Heart left ventricle (tissue), 16 donors: ENCODE measurements at regions of chr2 and their contacts with region 1.

Region 1: DNA sequence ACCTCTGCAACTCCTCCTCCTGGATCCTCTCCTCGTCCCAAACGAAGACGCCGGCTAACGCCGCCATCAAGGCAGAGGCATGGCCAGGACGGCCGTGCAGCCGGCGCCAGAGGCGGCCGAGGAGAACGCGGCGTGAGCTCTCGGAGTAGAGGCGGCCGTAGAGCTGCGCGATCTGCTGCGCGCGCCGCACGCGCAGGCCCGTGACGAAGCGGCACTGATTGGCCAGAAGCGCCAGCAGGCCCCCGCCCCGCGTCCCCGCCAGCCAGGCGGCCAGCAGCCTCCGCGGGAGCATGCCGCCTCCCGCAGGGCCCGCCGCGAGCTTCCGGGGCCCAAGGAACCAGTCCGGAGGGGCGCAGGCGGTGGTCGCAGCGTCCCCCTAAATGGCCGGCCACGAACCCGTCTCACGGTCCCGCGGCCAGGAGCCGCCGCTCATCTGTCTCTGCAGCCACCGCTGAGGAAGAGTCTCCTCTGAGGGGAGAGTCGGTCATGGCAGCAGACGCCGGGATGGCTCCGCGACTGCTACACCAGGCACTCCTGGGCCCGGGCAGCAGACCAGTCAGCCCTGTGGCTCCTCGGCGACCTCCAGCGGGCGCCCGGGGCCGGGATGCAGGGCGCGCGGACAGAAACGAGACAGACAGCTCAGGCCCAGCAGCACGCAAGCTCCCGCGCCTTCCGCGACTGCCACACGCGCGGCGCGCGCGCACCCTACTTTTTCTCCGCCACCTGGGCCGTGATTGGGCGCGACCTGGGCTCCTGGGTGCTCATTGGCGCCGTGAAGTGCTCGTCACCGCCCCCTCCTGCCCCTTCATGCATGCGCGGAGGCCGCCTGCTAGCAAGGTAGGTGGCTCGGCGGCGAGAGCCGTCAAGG is at the start of gene STARD7:
- DNase-seq: peak; percentile 99
- ATAC-seq: peak; percentile 89 to 96 (median 96)
- H3K4me3 ChIP-seq: peak within 1 kb of the TSS; percentile 57 to 98 (median 84)
- H3K27ac ChIP-seq: peak within 1 kb of the TSS; percentile 84 to 100 (median 97)
- H3K4me1 ChIP-seq: peaks cover 6 to 54% (median 49%) of the 10 kb centered on the region in 12 donors
- H3K27me3 ChIP-seq: no peaks in the 10 kb centered on the region
- CTCF ChIP-seq: peak in 8 of 12 donors; percentile 3 to 45 (median 26)
- POLR2A ChIP-seq: peak; percentile 86 to 99
- total RNA-seq, gene STARD7: 148 to 526 (median 188) TPM

Region 2: DNA sequence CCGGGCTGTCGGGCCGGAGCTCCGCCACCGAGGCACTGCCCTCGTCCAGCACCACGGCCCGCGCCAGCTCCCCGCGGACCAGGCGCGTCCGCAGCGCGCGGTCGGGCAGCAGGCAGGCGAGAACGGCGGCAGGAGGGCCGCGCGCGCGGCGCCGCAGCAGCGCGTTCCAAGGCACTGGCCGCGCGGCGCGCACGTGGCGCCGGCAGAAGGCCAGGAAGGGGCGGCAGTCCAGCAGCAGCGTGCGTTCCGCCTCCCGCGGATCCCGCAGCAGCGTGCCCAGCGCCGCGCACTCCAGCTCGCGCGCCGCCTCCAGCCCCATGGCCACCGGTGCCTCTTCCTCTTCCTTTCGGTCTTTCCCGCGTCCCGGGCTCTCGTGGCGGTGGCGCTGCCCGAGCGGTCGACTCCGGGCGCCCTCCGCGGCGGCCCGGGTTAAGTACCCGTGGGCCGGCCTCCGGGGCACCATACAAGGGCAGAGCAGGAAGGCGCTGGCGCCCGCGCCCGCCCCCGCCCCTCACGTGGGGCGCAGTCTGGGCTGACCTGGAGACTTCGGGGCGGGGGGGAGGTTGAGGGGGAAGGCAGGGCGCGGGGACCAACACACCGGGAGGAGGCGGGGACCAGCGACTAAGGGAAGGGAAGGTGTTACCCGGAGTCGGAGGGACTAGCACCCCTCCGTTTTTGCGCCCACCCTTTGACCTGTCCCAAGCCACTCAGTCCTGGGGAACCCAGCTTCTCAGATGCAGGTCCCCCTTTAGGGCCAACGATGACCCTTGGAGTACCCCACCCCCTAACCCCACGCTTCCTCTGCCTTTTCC is 63.1 kb before region 1 on chr2 and contains the start of gene DUSP2:
- intact Hi-C with region 1: loop called in 1 of 10 experiments (anchors 5 kb)
- DNase-seq: peak; percentile 77 to 89 (median 79)
- ATAC-seq: peak; percentile 66 to 91 (median 85)
- H3K4me3 ChIP-seq: peak within 1 kb of the TSS; percentile 29 to 69 (median 56)
- H3K27ac ChIP-seq: peak within 1 kb of the TSS; percentile 4 to 90 (median 50)
- H3K4me1 ChIP-seq: peaks cover 0 to 60% (median 27%) of the 10 kb centered on the region in 12 donors
- H3K27me3 ChIP-seq: peaks cover 0 to 7% (median 0%) of the 10 kb centered on the region in 9 donors
- CTCF ChIP-seq: peak in 2 of 12 donors; percentile 20 to 26
- POLR2A ChIP-seq: peak in 1 of 2 donors; percentile 60
- total RNA-seq, gene DUSP2: 0.56 to 11.1 (median 2.7) TPM

Region 3: DNA sequence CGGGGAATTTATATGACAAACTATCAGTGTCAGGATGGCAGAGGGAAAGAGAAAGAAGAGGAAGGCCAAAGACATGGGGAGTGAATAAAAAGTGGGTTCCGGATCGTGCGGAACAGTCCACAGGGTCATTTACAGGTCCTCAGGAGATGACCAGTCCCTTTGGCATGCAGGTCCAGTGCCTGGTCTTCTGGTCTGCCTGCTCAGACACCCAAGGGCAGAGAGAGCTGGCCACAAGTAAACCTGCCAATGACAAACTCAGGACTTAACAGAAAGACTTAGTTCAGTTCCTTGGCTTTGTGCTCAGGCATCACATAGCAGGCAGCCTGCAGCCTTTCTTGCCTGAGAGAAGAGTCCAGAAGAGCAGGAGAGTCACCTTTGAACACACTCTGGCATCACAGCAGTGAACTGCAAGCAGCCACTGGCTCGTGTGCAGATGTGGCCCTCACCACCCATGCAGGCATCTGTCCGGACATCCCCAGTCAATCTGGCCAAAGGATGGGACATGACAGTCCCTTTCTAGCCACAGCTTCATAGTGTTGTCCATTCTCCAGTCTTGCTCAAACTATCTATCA is 43.4 kb after region 1 on chr2:
- intact Hi-C with region 1: loop called in 5 of 10 experiments (anchors 5 kb)
- DNase-seq: peak in 4 of 5 donors; percentile 55 to 82 (median 68)
- ATAC-seq: peak; percentile 71 to 77 (median 74)
- H3K4me3 ChIP-seq: peak overlapping the region in 1 of 12 donors; percentile 18
- H3K27ac ChIP-seq: peak overlapping the region in 11 of 12 donors; percentile 59 to 96 (median 71)
- H3K4me1 ChIP-seq: peaks cover 2 to 88% (median 67%) of the 10 kb centered on the region in 12 donors
- H3K27me3 ChIP-seq: no peaks in the 10 kb centered on the region
- CTCF ChIP-seq: no peak
- POLR2A ChIP-seq: peak in 1 of 2 donors; percentile 13

Region 4: DNA sequence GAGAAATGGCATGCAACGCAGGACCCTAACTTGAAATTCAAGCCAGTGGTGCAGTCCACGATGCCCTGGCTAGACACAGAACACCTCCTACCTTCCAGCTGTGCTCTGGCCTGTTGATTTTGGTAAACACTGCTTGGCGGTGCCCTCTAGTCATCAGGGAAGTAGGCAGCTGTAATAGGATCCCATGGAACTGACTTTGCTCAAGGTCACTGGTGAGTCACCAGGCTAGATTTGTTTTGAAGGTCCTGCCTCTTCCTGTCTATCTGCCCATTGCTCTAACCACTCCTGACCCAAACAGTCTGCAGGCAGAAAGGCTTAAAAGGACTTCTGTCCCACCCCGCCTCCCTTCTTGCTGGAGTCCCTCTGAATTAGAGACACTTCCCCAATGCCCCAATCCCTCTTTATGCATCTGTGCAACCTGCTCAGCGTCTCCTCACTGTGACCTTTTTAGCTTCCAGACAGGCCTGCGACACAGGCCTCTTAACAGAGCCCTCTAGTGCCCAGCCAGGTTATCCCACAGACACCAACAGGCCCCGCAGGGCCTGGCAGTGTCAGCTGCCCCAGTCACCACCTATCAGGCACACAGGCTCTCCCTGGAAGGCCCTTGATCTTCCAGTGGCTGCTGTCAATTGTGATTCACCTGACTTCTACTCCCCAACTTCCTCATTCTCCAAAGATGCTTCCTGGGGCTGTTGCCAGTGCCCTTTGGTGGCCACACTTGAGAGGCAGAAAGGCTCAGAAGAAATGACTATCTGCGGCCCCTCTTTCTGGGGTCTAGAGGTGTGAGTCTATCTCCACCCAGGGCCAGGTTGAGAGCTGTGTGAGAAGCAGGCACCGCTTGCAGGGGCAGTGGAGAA is 52.3 kb after region 1 on chr2:
- intact Hi-C with region 1: loop called in 6 of 10 experiments (anchors 1 to 5 kb)
- DNase-seq: peak in 4 of 5 donors; percentile 64 to 87 (median 79)
- ATAC-seq: peak; percentile 75 to 85 (median 82)
- H3K4me3 ChIP-seq: peak overlapping the region in 10 of 12 donors; percentile 3 to 30 (median 16)
- H3K27ac ChIP-seq: peak overlapping the region; percentile 62 to 96 (median 92)
- H3K4me1 ChIP-seq: peaks cover 47 to 94% (median 88%) of the 10 kb centered on the region in 12 donors
- H3K27me3 ChIP-seq: no peaks in the 10 kb centered on the region
- CTCF ChIP-seq: peak; percentile 15 to 68 (median 41)
- POLR2A ChIP-seq: peak in 1 of 2 donors; percentile 54

Region 5: GRCh38 chr2:96265840-96266679 is 57.7 kb after region 1 on chr2 and contains the starts of genes CIAO1 and TMEM127:
- intact Hi-C with region 1: loop called in 4 of 10 experiments (anchors 2 to 5 kb)
- DNase-seq: peak; percentile 99 to 100 (median 99)
- ATAC-seq: peak; percentile 95 to 97 (median 96)
- H3K4me3 ChIP-seq: peak within 1 kb of the TSS; percentile 72 to 100 (median 90)
- H3K27ac ChIP-seq: peak within 1 kb of the TSS; percentile 86 to 98 (median 95)
- H3K4me1 ChIP-seq: peaks cover 16 to 55% (median 49%) of the 10 kb centered on the region in 12 donors
- H3K27me3 ChIP-seq: no peaks in the 10 kb centered on the region
- CTCF ChIP-seq: peak in 7 of 12 donors; percentile 7 to 30 (median 20)
- POLR2A ChIP-seq: peak; percentile 91 to 97
- total RNA-seq, gene CIAO1: 57.7 to 109 (median 68.7) TPM
- total RNA-seq, gene TMEM127: 71.8 to 134 (median 103) TPM

Region 6: DNA sequence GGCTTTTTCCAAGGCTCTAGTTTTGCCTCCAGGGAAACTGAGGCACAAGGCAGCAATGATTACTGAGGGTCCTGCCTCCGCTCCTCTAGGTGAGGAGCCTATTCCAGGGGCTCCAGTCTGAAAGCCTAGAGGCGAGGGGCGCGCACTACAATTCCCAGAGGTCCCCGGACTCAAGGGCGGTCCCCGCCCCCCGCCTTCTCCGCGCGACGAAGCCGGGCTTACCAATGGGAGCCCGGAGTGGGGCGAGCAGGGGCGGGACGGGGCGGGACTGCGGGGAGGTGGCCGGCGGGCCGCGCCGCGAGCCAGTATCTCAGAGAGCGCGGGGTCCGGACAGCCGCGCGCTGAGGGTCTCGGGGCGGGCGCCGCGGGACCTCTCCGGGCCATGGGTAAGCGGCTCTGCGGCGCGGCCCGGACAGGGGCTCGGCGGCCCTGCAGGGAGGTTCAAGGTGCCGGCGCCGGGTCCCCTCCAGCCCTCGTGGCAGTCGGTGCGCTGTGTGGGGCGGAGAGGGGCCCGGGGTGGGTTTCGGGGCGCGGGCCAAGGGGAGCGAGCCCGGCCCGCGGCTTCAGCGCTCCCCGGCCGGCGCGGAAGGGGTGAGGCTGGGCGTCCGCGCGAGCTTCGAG is 328.2 kb after region 1 on chr2 and contains the start of gene ARID5A:
- intact Hi-C with region 1: loop called in 1 of 10 experiments (anchors 10 kb)
- DNase-seq: peak; percentile 95 to 98 (median 96)
- ATAC-seq: peak; percentile 69 to 82 (median 77)
- H3K4me3 ChIP-seq: peak within 1 kb of the TSS; percentile 84 to 99 (median 97)
- H3K27ac ChIP-seq: peak within 1 kb of the TSS; percentile 85 to 100 (median 98)
- H3K4me1 ChIP-seq: peaks cover 22 to 88% (median 74%) of the 10 kb centered on the region in 12 donors
- H3K27me3 ChIP-seq: no peaks in the 10 kb centered on the region
- CTCF ChIP-seq: peak in 10 of 12 donors; percentile 25 to 60 (median 42)
- POLR2A ChIP-seq: peak; percentile 99 to 100
- total RNA-seq, gene ARID5A: 13.3 to 50.2 (median 28.2) TPM